Transverse colon (tissue), 4 donors: ENCODE measurements at regions of chr12 and their contacts with region 1.

Region 1: GRCh38 chr12:121568971-121569751 is 11.7 kb downstream of the KDM2B start:
- DNase-seq: peak; percentile 21
- H3K4me3 ChIP-seq: no peak overlapping the region
- H3K27ac ChIP-seq: peak overlapping the region; percentile 42 to 60 (median 51)
- H3K4me1 ChIP-seq: peaks cover 0 to 17% (median 6%) of the 10 kb centered on the region in 4 donors
- H3K27me3 ChIP-seq: no peaks in the 10 kb centered on the region
- CTCF ChIP-seq: no peak
- EP300 ChIP-seq: no peak
- POLR2A ChIP-seq: no peak

Region 2: DNA sequence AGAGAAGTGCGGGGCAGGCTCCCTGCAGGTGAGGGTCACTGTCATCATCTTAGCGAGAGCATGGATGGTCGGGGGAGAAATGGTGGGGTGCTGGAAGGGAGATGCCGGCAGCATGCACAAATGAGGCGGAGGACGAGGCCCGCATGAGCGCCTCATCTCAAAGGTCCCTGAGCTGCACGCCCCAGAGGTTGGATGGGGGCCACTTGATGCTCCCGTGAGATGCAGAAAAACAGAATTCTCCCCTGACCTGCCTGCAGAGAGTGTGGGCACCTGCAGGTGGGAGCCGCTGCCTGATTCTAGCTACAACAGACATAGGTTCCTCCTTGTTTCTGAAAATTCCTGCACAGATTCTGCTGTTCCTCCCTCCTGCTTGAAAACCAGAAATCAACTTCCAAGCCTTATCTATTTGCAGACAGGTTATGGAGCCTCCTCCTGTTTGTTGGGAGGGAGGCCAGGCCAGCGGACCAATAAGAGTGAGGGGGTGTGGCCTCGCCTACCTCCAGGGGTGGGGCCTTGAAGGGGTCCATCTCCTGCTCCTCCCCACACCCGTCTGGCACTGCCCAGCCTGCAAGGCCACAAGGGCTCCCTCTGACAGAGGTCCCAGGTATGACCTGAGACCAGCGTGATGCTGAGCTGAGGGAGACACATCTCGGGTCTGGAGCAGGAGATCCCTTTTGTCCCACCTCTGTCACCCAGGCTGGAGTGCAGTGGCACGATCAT is 55.5 kb before region 1 on chr12:
- in situ Hi-C with region 1: no loop called
- intact Hi-C with region 1: no loop called
- DNase-seq: peak; percentile 58
- H3K4me3 ChIP-seq: no peak overlapping the region
- H3K27ac ChIP-seq: no peak overlapping the region
- H3K4me1 ChIP-seq: no peaks in the 10 kb centered on the region
- H3K27me3 ChIP-seq: no peaks in the 10 kb centered on the region
- CTCF ChIP-seq: no peak
- EP300 ChIP-seq: no peak
- POLR2A ChIP-seq: no peak

Region 3: DNA sequence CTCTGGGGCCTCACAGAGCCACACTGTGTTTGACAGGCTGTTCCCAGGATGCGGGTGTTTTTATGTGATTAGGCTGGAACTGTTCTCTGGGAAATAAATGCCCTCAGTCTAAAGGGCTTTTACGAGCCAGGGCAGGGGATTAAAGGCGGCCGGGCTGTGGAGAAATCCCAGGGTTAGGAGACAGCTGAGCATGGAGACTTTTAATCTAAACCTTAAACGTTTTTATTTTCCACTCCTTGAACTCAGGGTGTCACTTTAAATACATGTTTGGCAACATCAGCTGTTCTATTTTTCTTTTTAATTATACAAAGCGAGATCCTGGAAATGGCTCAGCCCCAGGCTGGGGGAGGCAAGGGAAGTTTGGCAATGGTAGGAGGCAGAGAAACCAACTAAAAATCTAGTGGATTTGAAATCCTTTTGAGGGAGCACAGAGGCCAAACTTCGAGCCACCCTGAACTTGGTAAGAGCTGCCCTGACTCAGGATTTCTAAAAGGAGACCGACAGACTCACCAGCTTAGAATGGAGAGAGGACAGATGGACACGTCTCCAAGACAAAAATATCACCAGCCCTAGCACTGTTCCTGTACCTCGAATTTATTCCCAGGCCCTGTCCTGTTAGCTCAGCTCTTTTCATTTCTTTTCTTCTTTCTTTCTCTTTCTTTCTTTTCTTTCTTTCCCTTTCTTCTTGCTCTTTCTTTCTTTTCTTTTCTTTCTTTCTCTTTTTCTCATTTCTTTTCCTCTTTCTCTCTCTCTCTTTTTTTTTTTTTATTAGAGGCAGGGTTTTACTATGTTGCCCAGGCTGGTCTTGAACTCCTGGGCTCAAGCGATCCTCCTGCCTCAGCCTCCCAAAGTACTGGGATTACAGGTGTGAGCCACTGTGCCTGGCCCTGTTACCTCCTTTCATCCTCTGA is 41.3 kb after region 1 on chr12:
- in situ Hi-C with region 1: loop called in 1 of 4 experiments (anchors 10 kb)
- intact Hi-C with region 1: no loop called
- DNase-seq: peak; percentile 40
- H3K4me3 ChIP-seq: no peak overlapping the region
- H3K27ac ChIP-seq: peak overlapping the region; percentile 69 to 88 (median 74)
- H3K4me1 ChIP-seq: peaks cover 5 to 14% (median 12%) of the 10 kb centered on the region in 4 donors
- H3K27me3 ChIP-seq: no peaks in the 10 kb centered on the region
- CTCF ChIP-seq: no peak
- EP300 ChIP-seq: no peak
- POLR2A ChIP-seq: no peak

Region 4: DNA sequence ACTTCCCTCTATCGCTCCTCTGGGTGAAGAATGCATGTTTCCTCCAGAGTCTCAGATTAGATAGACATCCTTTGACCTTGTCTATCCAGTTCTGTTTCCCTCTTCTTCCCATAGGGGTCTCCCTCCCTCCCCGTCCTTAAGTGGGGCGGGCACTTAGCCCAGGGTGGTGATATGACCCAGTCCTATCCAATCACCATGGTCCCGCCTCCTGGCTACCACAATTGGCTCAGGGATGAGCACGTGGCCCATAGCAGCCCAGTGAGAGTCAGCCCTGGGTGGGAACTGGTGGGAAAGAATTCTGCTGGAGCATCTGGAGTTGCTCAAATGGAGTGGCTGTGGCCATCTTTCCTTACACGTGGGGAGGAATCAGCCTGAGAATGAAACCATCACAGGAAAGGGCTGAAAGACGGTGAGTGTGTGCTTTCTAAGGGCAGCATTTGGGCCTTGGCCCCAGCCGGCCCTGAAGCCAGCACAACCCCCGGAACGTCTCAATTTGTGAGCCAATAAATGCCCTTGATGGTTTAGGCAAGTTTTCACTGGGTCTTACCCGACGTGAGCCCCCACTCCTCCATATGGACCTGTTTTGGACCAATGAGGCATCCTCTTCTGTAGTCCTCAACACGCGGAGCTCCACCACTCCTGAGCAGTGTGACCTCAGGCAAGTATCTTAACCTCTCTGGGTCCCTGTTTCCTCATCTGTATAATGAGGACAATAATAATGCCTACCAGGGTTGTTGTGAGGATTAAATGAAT is 495.0 kb after region 1 on chr12:
- in situ Hi-C with region 1: no loop called
- intact Hi-C with region 1: no loop called
- DNase-seq: peak; percentile 88
- H3K4me3 ChIP-seq: peak overlapping the region in 2 of 4 donors; percentile 1 to 15
- H3K27ac ChIP-seq: peak overlapping the region; percentile 87 to 92 (median 90)
- H3K4me1 ChIP-seq: peaks cover 32 to 82% (median 62%) of the 10 kb centered on the region in 4 donors
- H3K27me3 ChIP-seq: no peaks in the 10 kb centered on the region
- CTCF ChIP-seq: peak; percentile 38 to 56 (median 39)
- EP300 ChIP-seq: no peak
- POLR2A ChIP-seq: no peak